ENCODE measurements at regions of chr1 and their contacts with region 1.

Region 1: DNA sequence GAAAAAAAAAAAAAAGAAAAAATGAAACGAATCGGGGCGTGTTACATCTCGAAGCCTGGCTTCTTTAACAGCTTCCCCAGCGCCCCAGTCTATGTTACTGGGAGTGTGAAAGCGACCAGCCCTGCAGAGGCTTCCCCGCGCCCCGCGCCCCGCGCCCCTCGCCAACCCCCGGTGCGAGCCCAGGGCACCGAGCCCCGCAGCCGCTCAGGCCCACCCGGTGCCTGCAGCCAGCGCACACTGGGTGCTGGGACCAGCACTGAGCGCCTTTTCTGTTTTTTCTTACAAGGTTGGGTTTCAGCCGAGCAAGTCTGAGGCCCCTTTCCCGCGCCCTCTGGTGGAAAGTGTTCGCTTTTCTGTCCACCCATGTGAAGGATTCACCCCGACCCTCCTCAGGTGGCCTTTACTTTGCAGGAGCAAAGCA is 42.1 kb upstream of the ZNF496 start:
- DNase-seq: peak; percentile 67
- H3K4me3 Mint-ChIP-seq: no peak overlapping the region
- H3K27ac Mint-ChIP-seq: no peak overlapping the region
- H3K4me1 Mint-ChIP-seq: peaks cover 2% of the 10 kb centered on the region
- H3K27me3 Mint-ChIP-seq: peaks cover 8% of the 10 kb centered on the region

Region 2: DNA sequence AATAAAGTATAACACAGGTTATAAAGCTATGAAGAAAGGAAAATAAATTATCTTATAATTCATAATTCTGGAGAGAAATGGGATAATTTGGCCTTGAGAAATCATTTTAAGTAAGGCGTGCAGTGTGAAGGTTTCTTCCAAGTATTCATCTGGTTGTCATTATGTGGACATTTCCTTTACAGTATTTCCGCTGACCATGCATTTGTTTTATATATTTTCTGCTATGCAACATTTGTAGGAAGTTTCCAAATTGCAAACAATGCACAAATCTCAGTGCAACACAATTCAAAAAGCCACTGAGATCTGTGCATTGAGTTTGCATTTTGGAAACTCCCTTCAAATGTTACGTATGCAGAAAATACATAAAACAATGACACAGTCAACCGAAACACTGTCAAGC is 313.0 kb before region 1 on chr1:
- CTCF ChIA-PET with region 1: no interaction called
- POLR2A ChIA-PET with region 1: no interaction called
- intact Hi-C with region 1: no loop called
- DNase-seq: no peak
- H3K4me3 Mint-ChIP-seq: no peak overlapping the region
- H3K27ac Mint-ChIP-seq: no peak overlapping the region
- H3K4me1 Mint-ChIP-seq: no peaks in the 10 kb centered on the region
- H3K27me3 Mint-ChIP-seq: no peaks in the 10 kb centered on the region

Region 3: DNA sequence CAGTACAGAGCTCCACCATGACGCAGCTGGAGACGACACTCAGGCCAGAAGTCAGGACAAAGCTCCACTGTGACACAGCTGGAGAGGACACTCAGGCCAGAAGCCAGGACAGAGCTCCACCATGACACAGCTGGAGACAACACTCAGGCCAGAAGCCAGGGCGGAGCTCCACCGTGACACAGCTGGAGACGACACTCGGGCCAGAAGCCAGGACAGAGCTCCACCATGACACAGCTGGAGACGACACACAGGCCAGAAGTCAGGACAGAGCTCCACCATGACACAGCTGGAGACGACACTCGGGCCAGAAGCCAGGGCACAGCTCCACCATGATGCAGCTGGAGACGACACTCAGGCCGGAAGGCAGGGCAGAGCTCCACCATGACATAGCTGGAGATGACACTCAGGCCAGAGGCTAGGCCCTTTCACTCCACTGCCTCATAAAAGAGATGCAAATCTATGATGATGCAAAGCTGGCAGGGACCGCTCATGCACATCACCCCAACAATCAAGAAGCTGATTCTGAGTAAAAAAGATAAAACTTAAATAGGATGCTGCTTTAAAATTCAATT is 97.8 kb after region 1 on chr1:
- CTCF ChIA-PET with region 1: interaction called, 12 read pairs
- POLR2A ChIA-PET with region 1: no interaction called
- intact Hi-C with region 1: no loop called
- DNase-seq: no peak
- H3K4me3 Mint-ChIP-seq: no peak overlapping the region
- H3K27ac Mint-ChIP-seq: no peak overlapping the region
- H3K4me1 Mint-ChIP-seq: peaks cover 3% of the 10 kb centered on the region
- H3K27me3 Mint-ChIP-seq: peaks cover 7% of the 10 kb centered on the region

Region 4: DNA sequence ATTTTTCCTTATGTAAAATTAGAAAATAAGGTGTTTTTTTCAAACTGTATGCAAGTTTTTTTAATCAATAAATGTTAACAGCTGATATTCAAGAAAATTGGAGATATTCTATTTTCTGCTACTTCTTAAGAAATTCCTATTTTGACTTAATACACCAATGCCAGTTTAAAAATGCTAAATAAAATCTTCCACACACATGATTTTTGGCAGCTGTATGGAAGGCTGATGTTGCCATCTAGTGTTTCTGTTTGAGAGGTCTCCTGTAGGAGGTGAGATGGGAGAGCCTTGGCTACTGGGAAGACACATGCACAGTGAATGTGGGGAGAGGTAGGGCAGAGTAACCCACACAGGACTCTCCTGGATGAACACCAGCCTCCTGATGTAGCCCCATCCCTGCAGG is 113.3 kb after region 1 on chr1:
- CTCF ChIA-PET with region 1: interaction called, 115 read pairs
- POLR2A ChIA-PET with region 1: no interaction called
- intact Hi-C with region 1: loop called (anchors 1 kb)
- DNase-seq: peak; percentile 26
- H3K4me3 Mint-ChIP-seq: no peak overlapping the region
- H3K27ac Mint-ChIP-seq: no peak overlapping the region
- H3K4me1 Mint-ChIP-seq: no peaks in the 10 kb centered on the region
- H3K27me3 Mint-ChIP-seq: peaks cover 7% of the 10 kb centered on the region

Region 5: DNA sequence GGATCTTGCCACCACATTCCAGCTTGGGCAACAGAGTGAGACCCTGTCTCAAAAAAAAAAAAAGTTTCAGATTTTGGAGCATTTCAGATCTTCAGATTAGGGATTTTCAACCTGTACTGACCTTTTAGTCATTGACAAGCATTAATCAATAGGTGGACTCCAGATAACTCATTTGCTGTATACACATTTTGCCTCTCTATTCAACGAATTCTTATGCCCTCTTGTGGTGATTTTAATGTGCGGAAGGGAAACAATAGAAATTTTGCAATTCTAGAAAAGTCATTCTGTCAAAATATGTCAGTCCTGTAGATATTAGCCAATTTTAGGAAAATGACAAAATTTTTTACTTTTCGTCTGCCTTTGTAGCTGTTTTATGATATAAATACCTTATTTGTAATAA is 202.8 kb after region 1 on chr1:
- CTCF ChIA-PET with region 1: interaction called, 5 read pairs
- POLR2A ChIA-PET with region 1: no interaction called
- intact Hi-C with region 1: loop called (anchors 1 kb)
- DNase-seq: no peak
- H3K4me3 Mint-ChIP-seq: no peak overlapping the region
- H3K27ac Mint-ChIP-seq: no peak overlapping the region
- H3K4me1 Mint-ChIP-seq: no peaks in the 10 kb centered on the region
- H3K27me3 Mint-ChIP-seq: peaks cover 7% of the 10 kb centered on the region

Region 6: DNA sequence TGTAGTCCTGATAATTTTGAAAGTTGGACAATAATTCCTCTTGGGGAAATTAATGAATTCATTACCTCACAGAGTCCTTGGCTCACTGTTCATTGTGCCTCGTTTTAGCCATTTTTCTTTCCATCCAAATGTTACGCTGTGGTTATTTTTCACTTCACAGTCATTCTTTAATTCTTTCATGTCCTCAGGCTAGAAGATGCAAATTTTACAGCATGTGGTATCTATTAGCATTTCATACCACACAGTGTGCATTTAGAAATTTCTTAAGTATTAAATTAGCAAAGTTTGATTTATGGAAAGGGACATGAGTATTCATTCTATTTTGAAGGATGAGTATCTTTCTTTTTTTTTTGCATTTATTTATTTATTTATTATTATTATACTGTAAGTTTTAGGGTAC is 691.3 kb after region 1 on chr1:
- CTCF ChIA-PET with region 1: no interaction called
- POLR2A ChIA-PET with region 1: no interaction called
- intact Hi-C with region 1: no loop called
- DNase-seq: no peak
- H3K4me3 Mint-ChIP-seq: no peak overlapping the region
- H3K27ac Mint-ChIP-seq: no peak overlapping the region
- H3K4me1 Mint-ChIP-seq: no peaks in the 10 kb centered on the region
- H3K27me3 Mint-ChIP-seq: no peaks in the 10 kb centered on the region